Natural killer cell (primary cell): ENCODE measurements at regions of chr16 and their contacts with region 1.

Region 1: DNA sequence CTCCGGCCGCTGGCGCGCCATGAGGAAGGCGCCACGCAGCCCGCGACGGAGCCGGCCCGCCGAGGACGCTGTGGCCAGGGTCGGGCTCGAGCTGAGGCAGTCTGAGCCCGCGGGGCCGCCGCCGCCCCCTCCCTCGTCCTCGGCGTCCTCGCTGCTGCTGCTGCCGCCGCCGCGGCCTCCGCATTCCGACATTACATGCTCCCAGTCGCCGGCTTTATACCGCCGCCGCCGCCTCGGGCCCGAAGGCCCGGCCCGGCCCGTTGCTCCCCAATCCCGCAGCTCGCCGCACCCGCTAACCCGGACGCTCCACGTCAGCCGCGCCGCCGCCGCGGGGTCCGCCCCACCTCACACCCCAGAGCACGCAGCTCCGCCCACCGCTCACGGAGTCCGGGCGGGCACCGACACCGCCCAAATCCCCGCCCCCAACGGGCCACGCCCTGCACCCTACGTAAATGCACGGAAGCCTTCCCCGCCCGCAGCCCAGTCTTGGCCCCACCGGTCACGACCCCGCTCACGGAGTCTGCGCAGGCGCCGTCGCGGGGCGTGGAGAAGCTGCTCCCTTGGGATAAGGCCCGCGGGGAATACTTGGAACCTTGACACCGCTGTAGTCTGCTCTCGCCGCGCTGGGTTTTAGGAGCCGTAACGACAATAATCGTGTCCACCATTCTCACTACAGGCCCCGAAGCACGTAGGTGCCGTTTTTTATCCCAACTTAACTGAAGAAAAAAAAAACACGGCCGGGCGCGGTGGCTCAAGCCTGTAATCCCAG is at the start of gene TXNDC11:
- DNase-seq: peak; percentile 99 to 100
- ATAC-seq: peak; percentile 88 to 98 (median 90)
- H3K4me3 ChIP-seq: peak within 1 kb of the TSS; percentile 93
- H3K4me3 Mint-ChIP-seq: peak within 1 kb of the TSS; percentile 97
- H3K27ac ChIP-seq: peak within 1 kb of the TSS; percentile 89
- H3K27ac Mint-ChIP-seq: peak within 1 kb of the TSS; percentile 92 to 94
- H3K4me1 ChIP-seq: peaks cover 33% of the 10 kb centered on the region
- H3K4me1 Mint-ChIP-seq: peaks cover 51 to 54% of the 10 kb centered on the region in 2 donors
- H3K27me3 ChIP-seq: no peaks in the 10 kb centered on the region
- H3K27me3 Mint-ChIP-seq: no peaks in the 10 kb centered on the region
- CTCF ChIP-seq: no peak
- total RNA-seq, gene TXNDC11: 63.4 to 99.2 (median 68.9) TPM

Region 2: GRCh38 chr16:11689031-11689761 is 53.5 kb before region 1 on chr16:
- intact Hi-C with region 1: no loop called
- DNase-seq: peak in 1 of 2 donors; percentile 18
- ATAC-seq: peak in 1 of 3 donors; percentile 37
- H3K4me3 ChIP-seq: no peak overlapping the region
- H3K4me3 Mint-ChIP-seq: no peak overlapping the region
- H3K27ac ChIP-seq: peak overlapping the region; percentile 51
- H3K27ac Mint-ChIP-seq: peak overlapping the region in 1 of 2 donors; percentile 64
- H3K4me1 ChIP-seq: peaks cover 3% of the 10 kb centered on the region
- H3K4me1 Mint-ChIP-seq: peaks cover 9 to 22% of the 10 kb centered on the region in 2 donors
- H3K27me3 ChIP-seq: no peaks in the 10 kb centered on the region
- H3K27me3 Mint-ChIP-seq: no peaks in the 10 kb centered on the region
- CTCF ChIP-seq: no peak

Region 3: GRCh38 chr16:11783319-11784037 is 40.8 kb after region 1 on chr16:
- intact Hi-C with region 1: loop called (anchors 1 kb)
- DNase-seq: peak; percentile 39 to 91
- ATAC-seq: peak; percentile 83 to 90 (median 84)
- H3K4me3 ChIP-seq: peak overlapping the region; percentile 30
- H3K4me3 Mint-ChIP-seq: peak overlapping the region; percentile 89
- H3K27ac ChIP-seq: peak overlapping the region; percentile 99
- H3K27ac Mint-ChIP-seq: peak overlapping the region; percentile 99 to 100
- H3K4me1 ChIP-seq: peaks cover 30% of the 10 kb centered on the region
- H3K4me1 Mint-ChIP-seq: peaks cover 47 to 51% of the 10 kb centered on the region in 2 donors
- H3K27me3 ChIP-seq: no peaks in the 10 kb centered on the region
- H3K27me3 Mint-ChIP-seq: no peaks in the 10 kb centered on the region
- CTCF ChIP-seq: no peak

Region 4: GRCh38 chr16:11797166-11797956 is 54.6 kb after region 1 on chr16 and contains the start of gene ZC3H7A:
- intact Hi-C with region 1: loop called (anchors 1 kb)
- DNase-seq: peak; percentile 93 to 97
- ATAC-seq: peak; percentile 95 to 99 (median 97)
- H3K4me3 ChIP-seq: peak within 1 kb of the TSS; percentile 91
- H3K4me3 Mint-ChIP-seq: peak within 1 kb of the TSS; percentile 94
- H3K27ac ChIP-seq: peak within 1 kb of the TSS; percentile 93
- H3K27ac Mint-ChIP-seq: peak within 1 kb of the TSS; percentile 96 to 98
- H3K4me1 ChIP-seq: peaks cover 38% of the 10 kb centered on the region
- H3K4me1 Mint-ChIP-seq: peaks cover 54 to 59% of the 10 kb centered on the region in 2 donors
- H3K27me3 ChIP-seq: no peaks in the 10 kb centered on the region
- H3K27me3 Mint-ChIP-seq: no peaks in the 10 kb centered on the region
- CTCF ChIP-seq: peak; percentile 66
- total RNA-seq, gene ZC3H7A: 80.6 to 91.8 (median 84.6) TPM

Region 5: DNA sequence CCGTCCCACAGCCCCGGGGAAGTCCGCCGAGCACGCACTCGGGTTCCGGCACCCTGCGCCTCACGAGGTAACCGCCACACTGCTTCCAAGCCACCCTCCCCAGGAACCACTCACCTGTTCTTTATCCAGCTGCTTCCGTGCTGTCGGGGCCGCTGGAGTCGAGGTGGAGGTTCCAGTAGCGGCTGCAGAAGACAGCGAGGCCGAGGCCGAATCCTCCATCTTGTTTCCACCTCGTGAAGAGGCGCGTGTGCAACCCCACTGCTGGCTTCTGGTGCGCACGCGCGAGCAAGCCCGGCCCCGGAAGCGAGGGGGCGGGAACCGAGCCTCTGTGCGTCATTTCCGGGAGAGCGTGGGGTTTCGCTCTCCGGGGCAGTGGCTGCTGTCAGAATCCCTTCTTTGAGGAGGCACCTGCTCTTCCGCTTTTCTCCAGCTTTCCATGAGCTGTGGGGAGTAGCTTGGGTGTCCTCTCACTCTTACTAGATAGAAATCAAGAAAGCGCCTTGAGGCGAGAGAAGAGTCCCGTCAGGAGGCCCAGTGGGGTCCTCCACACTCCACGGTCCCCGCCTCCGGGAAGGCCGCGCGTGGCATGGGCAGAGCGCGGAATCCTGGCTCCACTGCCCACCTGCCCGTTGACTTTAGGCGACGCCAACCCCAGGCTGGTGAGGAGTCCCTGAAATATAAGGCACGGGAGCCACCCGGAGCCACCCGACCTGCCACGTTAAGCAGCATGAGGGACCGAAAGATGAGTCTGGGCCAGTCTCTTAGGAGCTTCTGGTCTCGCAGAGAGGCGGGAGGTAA is 108.8 kb after region 1 on chr16 and contains the start of gene RSL1D1:
- intact Hi-C with region 1: loop called (anchors 1 kb)
- DNase-seq: peak; percentile 98
- ATAC-seq: peak; percentile 80 to 91 (median 85)
- H3K4me3 ChIP-seq: peak within 1 kb of the TSS; percentile 91
- H3K4me3 Mint-ChIP-seq: peak within 1 kb of the TSS; percentile 99
- H3K27ac ChIP-seq: peak within 1 kb of the TSS; percentile 87
- H3K27ac Mint-ChIP-seq: peak within 1 kb of the TSS; percentile 97 to 98
- H3K4me1 ChIP-seq: peaks cover 24% of the 10 kb centered on the region
- H3K4me1 Mint-ChIP-seq: peaks cover 44 to 47% of the 10 kb centered on the region in 2 donors
- H3K27me3 ChIP-seq: no peaks in the 10 kb centered on the region
- H3K27me3 Mint-ChIP-seq: no peaks in the 10 kb centered on the region
- CTCF ChIP-seq: no peak
- total RNA-seq, gene RSL1D1: 66.3 to 102 (median 99.1) TPM